Activated naive CD4-positive, alpha-beta T cell treated with anti-CD3 and anti-CD28 coated beads for 36 hours (primary cell): ENCODE measurements at regions of chr11 and their contacts with region 1.

Region 1: DNA sequence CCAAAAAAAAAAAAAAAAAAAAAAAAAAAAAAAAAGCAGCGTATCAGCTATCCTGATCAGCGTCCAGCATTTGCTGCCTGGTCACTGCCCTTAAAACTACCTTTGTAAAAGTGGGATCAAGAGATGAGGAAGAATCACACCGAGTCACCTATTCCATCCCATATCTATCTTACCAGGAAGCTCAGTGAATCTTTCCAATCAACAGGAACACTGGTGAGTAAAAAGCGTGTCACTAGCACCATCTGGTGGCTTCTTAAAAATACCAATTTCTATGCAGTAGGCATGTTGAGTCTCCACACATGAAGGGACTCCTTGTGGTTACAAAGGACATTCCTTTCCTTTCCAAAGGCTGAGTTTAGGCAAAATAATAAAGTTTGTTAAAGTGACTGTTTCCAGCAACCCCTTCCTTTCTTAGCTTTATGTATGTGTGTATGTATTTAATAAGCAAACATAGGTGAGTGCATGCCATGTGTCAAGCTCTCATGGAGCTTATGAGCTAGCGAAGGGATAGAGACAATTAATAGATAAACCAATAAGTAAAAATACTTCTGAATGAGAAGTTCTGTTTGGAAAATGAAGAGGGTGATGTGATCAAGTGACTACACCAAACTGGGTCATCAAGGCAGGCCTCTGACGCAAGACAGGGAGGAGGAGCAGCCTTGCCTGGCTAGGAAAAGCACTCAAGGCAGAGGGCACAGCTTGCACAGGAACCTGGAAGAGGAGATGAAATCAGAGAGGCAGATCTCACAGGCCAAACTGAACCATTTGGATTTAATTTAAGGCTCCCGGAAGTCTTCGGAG is 13.9 kb upstream of the TP53AIP1 start:
- DNase-seq: peak; percentile 46
- H3K4me3 Mint-ChIP-seq: no peak overlapping the region
- H3K27ac Mint-ChIP-seq: no peak overlapping the region
- H3K4me1 Mint-ChIP-seq: no peaks in the 10 kb centered on the region
- H3K27me3 Mint-ChIP-seq: peaks cover 3% of the 10 kb centered on the region

Region 2: DNA sequence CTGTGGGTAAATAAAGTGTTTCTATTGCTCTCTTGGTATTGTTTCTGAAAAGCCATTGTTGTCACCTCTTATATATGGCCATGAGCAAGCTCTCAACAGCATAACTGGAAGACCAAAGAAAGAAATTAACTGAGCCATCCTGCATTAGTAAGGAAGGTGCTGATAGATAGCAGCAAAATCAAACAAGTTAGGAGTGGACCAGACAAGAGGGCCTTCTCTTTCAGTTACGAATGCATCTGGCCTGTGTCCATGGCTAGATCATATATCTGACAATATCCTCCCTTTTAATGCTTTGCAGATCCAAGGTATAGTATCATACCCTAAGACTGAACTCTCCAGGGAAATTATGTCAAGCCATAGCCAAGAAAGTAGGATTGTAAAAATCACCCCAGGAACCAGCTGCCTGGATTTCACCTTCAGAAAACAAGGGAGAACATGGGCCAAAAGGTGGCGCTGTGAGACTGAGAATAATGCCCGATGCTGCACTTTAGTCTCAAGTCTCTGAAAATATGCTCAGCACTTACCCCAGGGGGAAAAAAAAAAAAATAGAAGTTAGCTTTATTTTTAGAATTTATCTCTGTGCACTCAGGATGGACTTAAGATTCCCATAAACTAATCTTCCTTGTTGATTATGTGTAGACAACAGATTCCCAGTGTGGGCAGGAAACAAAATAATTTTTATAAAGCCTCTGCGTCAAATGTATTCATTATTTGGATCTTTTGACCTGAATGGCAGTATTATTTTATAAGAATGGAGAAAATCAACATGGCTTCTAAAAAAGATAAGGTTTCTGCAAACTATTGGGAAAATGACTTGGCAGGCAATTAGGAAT is 784.3 kb before region 1 on chr11:
- CTCF ChIA-PET with region 1: interaction called, 3 read pairs
- intact Hi-C with region 1: loop called (anchors 2 kb)
- DNase-seq: peak; percentile 96
- H3K4me3 Mint-ChIP-seq: no peak overlapping the region
- H3K27ac Mint-ChIP-seq: no peak overlapping the region
- H3K4me1 Mint-ChIP-seq: peaks cover 7% of the 10 kb centered on the region
- H3K27me3 Mint-ChIP-seq: no peaks in the 10 kb centered on the region

Region 3: GRCh38 chr11:128868841-128869580 is 87.6 kb before region 1 on chr11:
- CTCF ChIA-PET with region 1: interaction called, 11 read pairs
- intact Hi-C with region 1: no loop called
- DNase-seq: peak; percentile 32
- H3K4me3 Mint-ChIP-seq: no peak overlapping the region
- H3K27ac Mint-ChIP-seq: no peak overlapping the region
- H3K4me1 Mint-ChIP-seq: no peaks in the 10 kb centered on the region
- H3K27me3 Mint-ChIP-seq: no peaks in the 10 kb centered on the region

Region 4: DNA sequence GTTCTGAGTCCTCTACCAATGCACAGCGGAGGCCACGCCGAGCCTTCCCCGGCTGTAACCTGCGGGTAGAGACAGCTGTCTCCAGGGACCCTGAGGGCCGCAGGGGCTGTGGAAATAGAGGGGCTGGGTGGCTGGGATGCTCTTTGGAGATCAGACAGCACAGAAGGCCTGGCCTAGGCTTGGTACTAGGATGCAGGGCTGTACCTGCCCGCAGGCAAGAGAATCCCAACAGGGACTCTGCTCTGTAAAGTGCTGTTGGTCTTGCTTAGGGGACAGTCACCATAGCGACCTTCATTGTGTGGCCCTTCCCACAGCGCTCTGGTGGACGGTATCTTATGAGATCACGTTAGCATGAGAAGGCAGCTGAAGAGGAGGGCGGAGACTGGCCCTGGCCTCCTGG is 76.8 kb before region 1 on chr11:
- CTCF ChIA-PET with region 1: interaction called, 175 read pairs
- intact Hi-C with region 1: loop called (anchors 1 kb)
- DNase-seq: no peak
- H3K4me3 Mint-ChIP-seq: no peak overlapping the region
- H3K27ac Mint-ChIP-seq: no peak overlapping the region
- H3K4me1 Mint-ChIP-seq: no peaks in the 10 kb centered on the region
- H3K27me3 Mint-ChIP-seq: peaks cover 8% of the 10 kb centered on the region

Region 5: GRCh38 chr11:128884703-128885338 is 71.8 kb before region 1 on chr11:
- CTCF ChIA-PET with region 1: interaction called, 175 read pairs
- intact Hi-C with region 1: loop called (anchors 1 kb)
- DNase-seq: peak; percentile 80
- H3K4me3 Mint-ChIP-seq: no peak overlapping the region
- H3K27ac Mint-ChIP-seq: no peak overlapping the region
- H3K4me1 Mint-ChIP-seq: no peaks in the 10 kb centered on the region
- H3K27me3 Mint-ChIP-seq: peaks cover 34% of the 10 kb centered on the region

Region 6: DNA sequence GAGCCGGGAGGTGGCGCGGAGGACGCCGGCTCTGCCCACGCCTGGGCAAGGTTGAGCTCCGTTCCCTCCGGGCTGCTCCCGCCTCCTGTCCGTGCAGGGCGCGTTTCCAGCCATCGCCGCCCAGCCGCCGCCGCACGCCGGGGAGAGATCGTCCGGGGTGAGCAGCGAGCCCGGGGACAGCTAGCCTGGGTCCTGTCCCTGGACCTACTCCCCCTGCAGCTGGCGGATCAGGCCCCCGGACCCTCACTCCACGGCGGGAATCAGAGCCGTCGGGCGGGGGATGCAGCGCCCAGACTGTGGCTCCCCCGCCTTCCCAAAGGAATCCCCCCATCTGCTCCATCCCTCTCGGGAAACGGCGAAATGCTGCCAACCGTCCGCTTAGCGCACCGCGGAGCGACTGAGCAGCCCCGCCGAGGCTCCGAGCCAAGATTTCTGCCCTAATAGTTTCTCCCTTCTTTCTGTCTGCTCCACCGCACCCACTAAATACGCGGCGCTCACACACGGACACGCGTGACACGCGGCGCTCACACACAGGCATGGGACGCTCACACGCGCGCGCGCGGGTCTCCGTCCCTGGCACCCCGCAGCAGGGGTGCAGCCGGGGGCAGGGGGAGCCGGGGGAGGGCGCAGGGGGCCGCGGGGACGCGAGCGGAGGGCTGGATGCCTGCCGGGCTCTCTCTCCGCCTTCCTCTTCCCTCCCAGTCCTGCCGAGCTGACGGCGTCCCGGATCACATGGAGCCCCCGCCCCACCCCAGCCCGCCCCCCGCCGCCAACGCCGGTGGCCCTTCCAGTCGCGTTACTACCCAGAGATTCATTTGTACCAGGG is 65.8 kb before region 1 on chr11 and contains the start of gene KCNJ5:
- CTCF ChIA-PET with region 1: interaction called, 175 read pairs
- intact Hi-C with region 1: no loop called
- DNase-seq: no peak
- H3K4me3 Mint-ChIP-seq: peak within 1 kb of the TSS; percentile 66
- H3K27ac Mint-ChIP-seq: no peak within 1 kb of the TSS
- H3K4me1 Mint-ChIP-seq: peaks cover 5% of the 10 kb centered on the region
- H3K27me3 Mint-ChIP-seq: peaks cover 38% of the 10 kb centered on the region
- total RNA-seq, gene KCNJ5: not detected

Region 7: GRCh38 chr11:128905345-128906184 is 51.0 kb before region 1 on chr11:
- CTCF ChIA-PET with region 1: interaction called, 12 read pairs
- intact Hi-C with region 1: no loop called
- DNase-seq: peak; percentile 62
- H3K4me3 Mint-ChIP-seq: peak overlapping the region; percentile 69
- H3K27ac Mint-ChIP-seq: no peak overlapping the region
- H3K4me1 Mint-ChIP-seq: peaks cover 11% of the 10 kb centered on the region
- H3K27me3 Mint-ChIP-seq: peaks cover 38% of the 10 kb centered on the region

Region 8: DNA sequence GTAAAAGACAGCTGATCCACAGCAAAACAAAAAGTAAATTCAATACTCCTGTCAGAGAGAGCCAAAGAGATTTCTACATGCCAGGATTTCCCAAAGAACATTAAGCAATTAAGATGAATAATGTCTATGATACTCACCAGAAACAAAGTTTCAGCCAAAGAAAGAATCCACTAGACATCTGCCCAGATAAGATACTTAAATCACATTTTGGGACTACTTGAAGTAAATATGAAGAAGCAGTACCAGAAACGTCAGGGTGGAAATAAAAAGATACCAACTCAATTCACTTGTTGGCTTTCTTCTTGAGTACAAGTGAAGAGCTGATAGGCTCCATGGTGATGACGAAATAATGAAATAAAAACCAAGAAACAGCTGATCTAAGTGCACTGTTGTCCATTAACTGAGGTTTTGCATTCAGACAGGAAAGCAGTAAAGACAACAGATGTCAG is 267.1 kb after region 1 on chr11:
- CTCF ChIA-PET with region 1: no interaction called
- intact Hi-C with region 1: no loop called
- DNase-seq: no peak
- H3K4me3 Mint-ChIP-seq: no peak overlapping the region
- H3K27ac Mint-ChIP-seq: no peak overlapping the region
- H3K4me1 Mint-ChIP-seq: no peaks in the 10 kb centered on the region
- H3K27me3 Mint-ChIP-seq: peaks cover 2% of the 10 kb centered on the region